Posterior cingulate gyrus (tissue), 11 donors: ENCODE measurements at regions of chr9 and their contacts with region 1.

Region 1: DNA sequence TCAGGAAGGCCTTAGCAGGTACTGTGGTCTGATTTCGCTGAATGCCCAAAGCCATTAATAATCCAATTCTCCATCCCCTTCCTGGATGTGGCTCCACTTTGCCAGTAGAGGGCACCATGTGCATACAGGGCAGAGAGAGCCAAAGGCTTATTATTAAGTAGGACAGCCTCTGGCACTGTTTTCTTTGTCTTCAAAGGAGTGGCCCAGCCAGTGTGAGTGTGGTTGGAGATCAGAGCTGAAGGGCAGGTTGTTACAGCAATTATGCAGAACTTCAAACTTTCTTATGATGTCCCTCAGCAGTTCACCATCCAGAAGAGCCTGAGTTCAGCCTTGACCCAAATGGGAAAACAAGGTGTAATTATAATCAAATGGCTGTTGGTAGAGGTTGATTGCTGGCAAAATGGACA is 38.6 kb upstream of the CEMIP2 start:
- DNase-seq: peak in 7 of 10 donors; percentile 23 to 92 (median 60)

Region 2: GRCh38 chr9:71758785-71759184 is 48.1 kb before region 1 on chr9:
- intact Hi-C with region 1: no loop called
- DNase-seq: no peak

Region 3: GRCh38 chr9:72025931-72026342 is 219.0 kb after region 1 on chr9:
- intact Hi-C with region 1: loop called (anchors 1 kb)
- DNase-seq: no peak

Region 4: GRCh38 chr9:72271613-72272478 is 464.9 kb after region 1 on chr9:
- intact Hi-C with region 1: loop called (anchors 5 kb)
- DNase-seq: peak in 4 of 10 donors; percentile 30 to 54 (median 46)